Right ventricle myocardium inferior (tissue), 1 donor: ENCODE measurements at regions of chr7 and their contacts with region 1.

Region 1: GRCh38 chr7:128455551-128456254 is at the start of gene HILPDA:
- DNase-seq: peak; percentile 98
- ATAC-seq: peak; percentile 96
- total RNA-seq, gene HILPDA: 5.9 TPM

Region 2: DNA sequence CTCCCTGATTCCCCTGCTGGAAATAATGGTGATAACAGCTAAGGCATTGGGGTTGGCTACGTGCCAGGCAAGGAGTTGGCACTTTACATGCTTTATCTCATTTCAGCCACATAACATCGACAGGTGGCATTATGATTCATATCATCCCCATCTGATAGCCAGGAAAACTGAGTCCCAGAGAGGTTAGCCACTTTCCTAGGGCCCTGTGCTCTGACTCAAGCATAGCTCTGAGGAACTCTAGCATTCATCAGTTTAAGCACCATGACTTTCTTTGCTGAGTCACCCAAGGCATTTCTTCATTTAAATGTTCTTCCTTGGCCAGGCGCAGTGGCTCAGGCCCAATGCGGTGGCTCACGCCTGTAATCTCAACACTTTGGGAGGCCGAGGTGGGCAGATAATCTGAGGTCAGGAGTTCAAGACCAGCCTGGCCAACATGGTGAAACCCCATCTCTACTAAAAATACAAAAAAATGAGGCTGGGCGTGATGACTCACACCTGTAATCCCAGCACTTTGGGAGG is 208.0 kb before region 1 on chr7:
- intact Hi-C with region 1: no loop called
- DNase-seq: no peak
- ATAC-seq: no peak

Region 3: DNA sequence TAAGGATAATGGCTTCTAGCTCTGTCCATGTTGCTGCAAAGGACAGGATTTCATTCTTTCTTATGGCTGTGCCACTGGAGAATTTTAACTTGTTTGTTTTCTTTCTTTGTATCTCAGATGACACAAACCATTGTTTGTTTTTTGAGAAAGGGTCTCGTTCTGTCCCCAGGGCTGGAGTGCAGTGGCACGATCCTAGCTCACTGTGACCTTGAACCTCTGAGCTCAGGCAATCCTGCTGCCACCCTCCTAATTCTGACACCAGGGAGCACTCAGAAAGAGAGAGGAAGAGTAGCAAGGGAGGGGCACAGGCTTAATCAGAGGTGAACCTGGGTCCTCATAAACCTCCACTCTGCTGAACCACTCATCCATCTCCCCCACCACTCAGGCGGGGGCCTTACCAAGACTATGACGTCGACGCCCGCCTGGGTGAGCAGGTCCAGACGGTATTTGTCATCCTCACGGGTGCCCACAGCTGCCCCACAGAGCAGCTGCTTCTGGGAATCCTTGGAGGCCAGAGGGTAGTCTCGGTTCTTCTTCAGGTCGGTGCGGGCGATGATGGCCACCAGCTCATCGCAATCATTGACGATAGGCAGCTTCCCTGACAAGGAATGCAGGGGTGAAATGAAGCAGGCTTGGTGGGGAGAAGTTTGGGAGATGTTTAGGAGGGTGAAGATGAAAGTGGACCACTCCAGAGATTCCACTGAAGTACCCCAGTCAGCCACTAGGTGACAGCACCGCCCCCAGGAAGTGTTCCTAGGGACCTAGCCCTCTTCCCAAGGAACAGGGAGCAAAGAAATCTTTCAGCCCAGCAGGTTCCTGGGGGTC is 57.5 kb before region 1 on chr7:
- intact Hi-C with region 1: loop called (anchors 2 kb)
- DNase-seq: no peak
- ATAC-seq: peak; percentile 78

Region 4: DNA sequence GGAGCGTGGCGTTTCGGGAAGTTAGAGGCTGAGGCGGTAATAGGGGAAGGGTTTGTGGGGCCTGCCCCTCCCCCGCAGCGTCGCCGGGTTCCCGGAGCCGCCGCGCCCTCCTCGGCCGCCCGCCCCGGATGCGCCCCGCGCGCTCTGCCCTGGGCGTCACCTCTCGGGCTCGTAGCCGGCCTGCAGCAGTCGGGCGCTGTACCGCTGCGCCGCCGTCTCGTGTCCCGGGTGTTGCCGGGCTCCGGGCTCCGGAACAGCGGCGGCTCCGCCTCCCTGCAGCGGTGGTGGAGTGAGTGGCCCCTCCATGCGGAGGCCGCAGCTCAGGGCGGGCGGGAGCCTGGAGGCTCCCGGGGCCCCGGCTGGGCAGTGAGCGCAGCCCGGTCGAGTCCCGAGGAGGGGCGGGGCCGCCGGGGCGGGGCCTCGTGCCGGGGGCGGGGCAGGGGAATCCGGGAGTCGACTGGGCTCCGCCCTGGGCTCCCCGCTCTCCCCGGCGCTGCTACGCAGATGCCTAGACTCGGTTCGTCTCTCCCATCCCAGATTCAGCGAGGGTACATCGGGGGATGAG is 46.0 kb before region 1 on chr7 and contains the start of gene IMPDH1:
- intact Hi-C with region 1: loop called (anchors 1 kb)
- DNase-seq: peak; percentile 95
- ATAC-seq: peak; percentile 95
- total RNA-seq, gene IMPDH1: 25.5 TPM

Region 5: DNA sequence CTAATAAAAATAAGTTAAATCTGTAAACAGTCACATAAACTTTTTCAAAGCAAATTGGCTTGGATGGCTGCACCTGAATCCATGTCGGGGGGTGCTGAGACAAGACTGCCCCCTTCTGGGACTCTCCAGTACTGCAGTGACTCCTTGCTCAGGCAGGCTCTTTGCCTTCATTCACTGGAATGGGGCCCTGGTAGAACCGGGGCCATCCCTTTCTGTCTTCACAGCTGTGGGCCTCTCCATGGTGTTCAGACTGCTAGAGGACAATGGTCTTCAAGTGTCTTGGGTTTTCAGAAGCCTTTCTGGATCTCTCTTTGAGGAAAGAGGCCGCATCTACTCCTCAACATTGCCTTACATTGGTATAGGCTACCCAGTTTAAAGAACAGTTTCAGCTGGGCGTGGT is 29.9 kb before region 1 on chr7:
- intact Hi-C with region 1: loop called (anchors 1 kb)
- DNase-seq: no peak
- ATAC-seq: peak; percentile 51